Left ventricle myocardium inferior (tissue), 1 donor: ENCODE measurements at regions of chr6 and their contacts with region 1.

Region 1: DNA sequence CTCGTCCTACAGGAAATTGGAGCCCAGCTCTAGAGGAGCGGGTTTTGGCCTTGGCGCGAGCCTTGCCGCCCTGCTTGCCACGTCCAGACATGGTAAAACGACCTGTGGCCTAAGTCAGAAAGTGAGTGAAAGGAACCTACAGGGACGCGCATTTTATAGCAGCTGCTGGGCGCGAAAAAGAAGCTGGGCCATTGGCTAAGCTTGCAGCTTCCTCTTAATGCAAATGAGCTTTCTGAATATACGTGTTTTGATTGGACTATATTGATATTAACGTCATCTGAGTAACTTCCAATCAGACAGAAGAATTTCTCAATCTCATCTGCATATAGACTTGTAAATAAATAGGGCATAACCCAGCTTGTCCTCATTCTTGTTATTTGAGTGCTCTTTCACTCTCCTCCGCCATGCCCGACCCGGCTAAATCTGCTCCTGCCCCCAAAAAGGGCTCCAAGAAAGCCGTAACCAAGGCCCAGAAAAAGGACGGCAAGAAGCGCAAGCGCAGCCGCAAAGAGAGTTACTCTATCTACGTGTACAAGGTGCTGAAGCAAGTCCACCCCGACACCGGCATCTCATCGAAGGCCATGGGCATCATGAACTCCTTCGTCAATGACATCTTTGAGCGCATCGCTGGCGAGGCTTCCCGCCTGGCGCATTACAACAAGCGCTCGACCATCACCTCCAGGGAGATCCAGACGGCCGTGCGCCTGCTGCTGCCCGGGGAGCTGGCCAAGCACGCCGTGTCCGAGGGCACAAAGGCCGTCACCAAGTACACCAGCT is 18.9 kb downstream of the OR2B2 start:
- DNase-seq: peak; percentile 66
- H3K4me3 ChIP-seq: peak overlapping the region; percentile 83
- H3K27ac ChIP-seq: peak overlapping the region; percentile 57
- H3K4me1 ChIP-seq: peaks cover 42% of the 10 kb centered on the region
- H3K27me3 ChIP-seq: peaks cover 48% of the 10 kb centered on the region
- CTCF ChIP-seq: no peak

Region 2: GRCh38 chr6:27188885-27189418 is 704.3 kb before region 1 on chr6:
- intact Hi-C with region 1: loop called (anchors 10 kb)
- DNase-seq: peak; percentile 23
- H3K4me3 ChIP-seq: peak overlapping the region; percentile 70
- H3K27ac ChIP-seq: peak overlapping the region; percentile 66
- H3K4me1 ChIP-seq: peaks cover 7% of the 10 kb centered on the region
- H3K27me3 ChIP-seq: peaks cover 2% of the 10 kb centered on the region
- CTCF ChIP-seq: peak; percentile 82

Region 3: GRCh38 chr6:27518881-27519795 is 374.1 kb before region 1 on chr6:
- intact Hi-C with region 1: loop called (anchors 5 kb)
- DNase-seq: peak; percentile 33
- H3K4me3 ChIP-seq: peak overlapping the region; percentile 69
- H3K27ac ChIP-seq: peak overlapping the region; percentile 77
- H3K4me1 ChIP-seq: peaks cover 13% of the 10 kb centered on the region
- H3K27me3 ChIP-seq: peaks cover 30% of the 10 kb centered on the region
- CTCF ChIP-seq: peak; percentile 77

Region 4: DNA sequence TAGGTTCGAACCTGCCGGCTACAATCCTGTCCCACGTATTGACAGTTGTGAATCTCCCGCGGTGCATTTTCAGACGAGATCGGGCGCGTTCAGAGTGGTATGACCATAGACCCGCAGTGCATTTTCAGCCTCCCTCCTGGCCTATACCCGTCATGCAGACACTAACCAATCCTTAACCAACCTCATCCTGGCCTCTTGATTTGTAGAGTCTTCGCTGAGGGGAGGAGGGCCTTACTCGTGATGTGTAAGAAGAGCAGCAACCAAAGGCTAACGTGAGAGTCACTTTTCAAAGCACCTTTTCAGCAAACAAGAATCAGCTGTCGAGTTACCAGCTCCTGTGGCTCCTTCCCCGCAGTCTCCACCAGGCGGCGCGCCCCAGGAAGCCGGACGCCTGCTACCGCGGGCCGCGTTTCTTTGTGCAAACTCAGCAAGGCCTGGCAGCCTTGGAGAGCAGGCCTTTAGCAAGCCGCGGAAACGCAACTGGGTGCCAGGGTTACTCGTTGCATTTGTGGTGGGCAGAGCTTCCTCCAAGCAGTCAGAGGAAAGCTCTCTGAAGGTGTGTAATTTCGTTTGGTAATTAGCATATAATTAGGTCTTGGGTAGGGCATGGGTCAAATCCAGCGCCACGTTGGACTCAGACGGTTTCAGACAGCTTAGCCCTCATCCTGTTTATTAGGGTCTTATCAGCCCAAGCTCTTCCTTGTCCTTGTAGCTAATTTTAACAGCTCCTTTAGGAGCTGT is 120.8 kb before region 1 on chr6:
- intact Hi-C with region 1: loop called (anchors 5 kb)
- DNase-seq: peak; percentile 84
- H3K4me3 ChIP-seq: no peak overlapping the region
- H3K27ac ChIP-seq: no peak overlapping the region
- H3K4me1 ChIP-seq: peaks cover 4% of the 10 kb centered on the region
- H3K27me3 ChIP-seq: peaks cover 89% of the 10 kb centered on the region
- CTCF ChIP-seq: peak; percentile 96

Region 5: GRCh38 chr6:27957516-27957915 is 64.3 kb after region 1 on chr6:
- intact Hi-C with region 1: no loop called
- DNase-seq: no peak
- H3K4me3 ChIP-seq: no peak overlapping the region
- H3K27ac ChIP-seq: no peak overlapping the region
- H3K4me1 ChIP-seq: no peaks in the 10 kb centered on the region
- H3K27me3 ChIP-seq: peaks cover 40% of the 10 kb centered on the region
- CTCF ChIP-seq: no peak